Left ventricle myocardium inferior (tissue), 1 donor: ENCODE measurements at regions of chr6 and their contacts with region 1.

Region 1: GRCh38 chr6:163416557-163417253 is 2.2 kb downstream of the QKI start:
- DNase-seq: no peak
- H3K4me3 ChIP-seq: peak overlapping the region; percentile 91
- H3K27ac ChIP-seq: peak overlapping the region; percentile 99
- H3K4me1 ChIP-seq: peaks cover 80% of the 10 kb centered on the region
- H3K27me3 ChIP-seq: no peaks in the 10 kb centered on the region
- CTCF ChIP-seq: peak; percentile 74

Region 2: DNA sequence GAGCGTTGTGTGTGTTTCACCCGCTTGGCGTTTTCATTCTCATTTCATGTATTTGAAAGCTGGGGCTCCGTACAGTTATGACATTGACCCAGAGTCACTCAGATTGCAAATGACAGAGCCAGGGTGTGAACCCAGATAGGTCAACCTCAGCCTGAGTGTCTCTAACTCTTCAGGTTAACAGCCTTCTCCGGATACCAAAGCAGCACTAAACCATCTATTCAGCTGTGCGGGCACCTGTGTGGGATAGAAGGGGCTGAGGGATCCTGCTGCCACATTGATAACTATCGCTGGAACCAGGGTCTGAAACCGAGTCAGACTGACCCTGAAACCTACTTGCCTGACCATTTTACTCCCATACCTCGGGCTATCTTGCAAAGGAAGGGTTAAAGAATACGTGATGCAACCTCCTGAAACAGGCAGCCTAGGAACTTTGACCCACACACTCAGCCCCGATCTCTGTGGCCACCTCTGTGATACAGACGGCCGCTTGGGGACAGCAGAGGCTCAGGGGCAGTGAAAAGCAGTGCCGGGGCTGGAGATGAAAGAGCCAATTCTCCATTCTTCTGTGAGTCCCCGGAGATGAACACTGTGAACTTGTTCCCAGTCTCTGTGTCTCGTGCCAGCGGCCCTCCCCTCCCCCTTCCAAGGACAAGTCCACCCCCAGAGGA is 235.7 kb before region 1 on chr6:
- intact Hi-C with region 1: loop called (anchors 5 kb)
- DNase-seq: peak; percentile 77
- H3K4me3 ChIP-seq: peak overlapping the region; percentile 40
- H3K27ac ChIP-seq: peak overlapping the region; percentile 7
- H3K4me1 ChIP-seq: peaks cover 25% of the 10 kb centered on the region
- H3K27me3 ChIP-seq: no peaks in the 10 kb centered on the region
- CTCF ChIP-seq: peak; percentile 95

Region 3: GRCh38 chr6:164106345-164106769 is 689.7 kb after region 1 on chr6:
- intact Hi-C with region 1: loop called (anchors 5 kb)
- DNase-seq: peak; percentile 73
- H3K4me3 ChIP-seq: peak overlapping the region; percentile 52
- H3K27ac ChIP-seq: peak overlapping the region; percentile 96
- H3K4me1 ChIP-seq: peaks cover 60% of the 10 kb centered on the region
- H3K27me3 ChIP-seq: no peaks in the 10 kb centered on the region
- CTCF ChIP-seq: peak; percentile 74